ENCODE measurements at regions of chr16 and their contacts with region 1.

Region 1: DNA sequence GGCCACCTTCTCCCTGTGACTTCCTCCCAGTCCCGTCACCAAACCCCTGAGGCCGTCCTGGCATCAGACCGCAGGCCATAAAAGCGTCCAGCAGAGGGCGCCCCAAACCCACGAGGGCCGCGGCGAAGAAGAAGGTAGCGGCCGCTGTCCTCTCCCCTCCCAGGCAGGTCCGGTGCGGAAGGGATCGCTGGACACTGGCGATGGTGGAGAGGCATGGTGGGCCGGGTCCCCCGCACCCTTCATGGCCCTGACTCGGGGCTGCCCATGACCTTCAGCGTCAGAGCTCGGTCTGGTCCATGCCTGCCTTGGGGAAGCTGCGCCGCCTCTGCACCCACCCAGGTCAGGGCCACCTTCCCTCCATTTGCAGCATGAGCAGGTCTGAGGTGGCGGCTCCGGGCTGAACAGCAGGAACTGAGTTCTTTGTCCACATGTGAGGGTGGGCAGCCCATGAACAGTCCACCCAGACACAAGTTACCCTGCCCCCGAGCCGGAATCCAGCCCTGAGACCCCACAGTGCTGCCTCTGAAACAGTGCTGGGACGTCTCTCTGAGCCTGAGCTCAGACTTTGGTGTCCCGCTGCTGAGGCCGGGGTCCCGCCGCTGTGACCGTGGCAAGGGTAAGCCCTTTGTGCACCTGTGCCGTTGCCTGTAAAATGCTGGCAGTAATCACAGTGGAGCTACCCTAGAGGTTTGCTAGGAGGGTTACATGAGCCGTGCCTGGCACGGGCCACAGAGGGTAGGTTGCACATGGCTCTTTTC is 40.8 kb upstream of the CMIP start:
- DNase-seq: no peak
- H3K4me3 ChIP-seq: peak overlapping the region; percentile 50
- CTCF ChIP-seq: peak; percentile 98

Region 2: GRCh38 chr16:81429045-81429521 is 25.3 kb after region 1 on chr16:
- CTCF ChIA-PET with region 1: interaction called, 10 read pairs
- POLR2A ChIA-PET with region 1: interaction called, 3 read pairs
- DNase-seq: no peak
- H3K4me3 ChIP-seq: no peak overlapping the region
- CTCF ChIP-seq: peak; percentile 57

Region 3: GRCh38 chr16:81521151-81521626 is 117.4 kb after region 1 on chr16:
- CTCF ChIA-PET with region 1: no interaction called
- POLR2A ChIA-PET with region 1: no interaction called
- DNase-seq: no peak
- H3K4me3 ChIP-seq: no peak overlapping the region
- CTCF ChIP-seq: no peak

Region 4: GRCh38 chr16:81585785-81586184 is 182.0 kb after region 1 on chr16:
- CTCF ChIA-PET with region 1: no interaction called
- POLR2A ChIA-PET with region 1: no interaction called
- DNase-seq: no peak
- H3K4me3 ChIP-seq: no peak overlapping the region
- CTCF ChIP-seq: peak; percentile 24

Region 5: DNA sequence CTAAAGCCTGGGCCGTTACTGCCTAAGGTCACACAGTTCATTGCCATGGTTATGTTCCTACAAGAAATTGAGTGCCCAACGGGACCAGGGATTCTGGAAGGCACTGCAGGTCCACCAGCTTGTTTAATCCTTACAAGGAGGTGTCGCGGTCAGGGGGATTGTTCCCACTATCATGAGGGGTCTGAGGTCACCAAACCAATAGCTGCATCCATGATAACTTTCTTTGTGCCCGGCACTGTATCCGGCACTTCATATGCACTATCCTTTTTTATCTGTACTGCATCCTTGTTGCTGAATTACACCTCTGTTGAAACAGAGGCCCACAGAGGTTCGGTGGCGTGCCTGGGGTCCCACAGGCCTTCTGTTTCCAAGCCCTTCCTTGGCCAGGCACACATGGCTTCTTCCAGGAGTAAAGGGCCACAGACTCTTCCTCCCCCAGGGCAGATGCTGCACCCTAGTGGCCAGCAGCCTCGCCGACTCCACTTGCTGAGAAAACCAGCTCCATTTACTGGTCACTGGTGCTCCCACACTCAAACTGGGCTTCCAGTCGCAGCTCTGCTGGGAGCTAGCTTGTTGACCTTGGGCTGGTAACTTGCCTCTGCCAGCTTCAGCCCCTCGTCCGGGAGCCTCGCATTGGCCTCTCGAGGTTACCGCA is 293.3 kb after region 1 on chr16:
- CTCF ChIA-PET with region 1: interaction called, 19 read pairs
- POLR2A ChIA-PET with region 1: no interaction called
- DNase-seq: peak; percentile 4
- H3K4me3 ChIP-seq: no peak overlapping the region
- CTCF ChIP-seq: peak; percentile 71

Region 6: DNA sequence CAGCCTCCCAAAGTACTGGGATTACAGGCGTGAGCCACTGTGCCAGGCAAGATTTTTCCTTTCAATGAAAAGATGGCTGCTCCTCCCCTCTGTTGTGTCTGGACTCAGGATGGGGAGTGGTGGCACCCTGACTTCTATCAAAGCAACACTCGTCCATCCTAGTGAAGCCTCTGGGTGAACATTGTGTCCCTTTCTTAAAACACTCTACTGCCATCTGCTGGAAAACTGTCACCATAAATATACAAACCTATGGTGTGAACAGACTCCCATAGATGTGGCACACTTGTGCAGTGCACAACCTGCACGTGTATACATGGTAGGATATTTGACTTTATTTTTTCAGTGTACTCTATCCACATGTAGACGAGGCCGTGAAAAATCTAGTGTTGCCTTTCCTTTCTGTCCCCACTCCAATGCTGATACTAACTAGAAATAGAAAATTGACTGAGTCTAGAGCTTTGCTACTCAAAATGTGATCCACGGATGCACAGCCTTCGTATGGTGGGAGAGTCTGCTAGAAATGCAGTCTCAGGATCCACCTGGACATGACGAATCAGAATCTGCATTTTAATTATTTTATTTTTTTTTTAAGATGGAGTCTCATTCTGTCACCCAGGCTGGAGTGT is 319.4 kb after region 1 on chr16:
- CTCF ChIA-PET with region 1: interaction called, 76 read pairs
- POLR2A ChIA-PET with region 1: no interaction called
- DNase-seq: peak; percentile 50
- H3K4me3 ChIP-seq: no peak overlapping the region
- CTCF ChIP-seq: peak; percentile 57